Caco-2 (cell line): ENCODE measurements at regions of chr4 and their contacts with region 1.

Region 1: DNA sequence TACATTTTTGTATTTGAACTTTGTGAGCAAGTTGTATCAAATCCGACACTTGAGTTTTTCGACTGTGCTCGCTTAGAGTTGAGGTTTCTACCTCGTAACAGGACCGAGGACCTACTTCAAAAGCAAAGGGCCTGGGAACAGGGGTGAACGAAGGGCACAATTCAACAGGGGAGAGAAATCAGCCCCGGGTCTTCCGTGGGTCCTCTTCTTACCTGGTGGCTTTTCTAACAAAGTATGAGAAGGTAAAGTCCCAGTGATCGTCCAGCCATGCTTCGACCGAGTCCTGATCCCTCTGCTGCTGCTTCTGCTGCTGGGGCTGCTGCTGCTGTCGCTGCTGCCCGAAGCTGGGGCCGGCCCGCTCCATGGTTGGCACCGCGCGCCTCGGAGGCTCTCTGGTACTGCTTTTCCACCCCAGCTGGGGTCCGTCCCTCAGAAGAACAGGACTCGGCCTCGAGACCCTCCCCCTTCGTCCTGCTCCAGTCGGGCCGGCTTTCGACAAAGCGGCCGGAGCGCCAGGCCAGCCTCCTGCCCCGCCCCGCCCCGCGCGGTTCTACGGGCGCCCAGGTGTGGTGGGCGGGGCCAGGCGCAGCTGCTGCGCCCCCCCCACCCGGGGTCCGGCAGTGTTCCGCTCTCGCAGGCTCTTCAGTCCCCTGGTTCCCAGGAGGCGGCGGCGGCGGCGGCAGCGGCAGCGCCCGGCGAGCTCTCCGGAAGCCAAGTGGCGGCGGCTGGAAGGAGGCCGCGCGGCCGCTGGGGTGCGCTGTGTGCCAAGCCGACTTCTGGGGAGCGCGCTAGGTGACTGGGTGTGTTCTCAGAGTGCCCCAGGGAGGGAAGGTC is at the start of gene PDE5A:
- DNase-seq: peak; percentile 82 to 91
- H3K4me3 ChIP-seq: peak within 1 kb of the TSS; percentile 69
- H3K4me3 Mint-ChIP-seq: peak within 1 kb of the TSS; percentile 90
- H3K27ac Mint-ChIP-seq: peak within 1 kb of the TSS; percentile 70
- H3K4me1 ChIP-seq: no peaks in the 10 kb centered on the region; the same call in 1 of the 2 replicates
- H3K4me1 Mint-ChIP-seq: peaks cover 5% of the 10 kb centered on the region
- H3K27me3 ChIP-seq: no peaks in the 10 kb centered on the region
- H3K27me3 Mint-ChIP-seq: no peaks in the 10 kb centered on the region
- CTCF ChIP-seq: peak; percentile 58 to 80
- total RNA-seq, gene PDE5A: 7.9 and 10.8 TPM in 2 replicates

Region 2: GRCh38 chr4:119314356-119314755 is 314.2 kb before region 1 on chr4:
- CTCF ChIA-PET with region 1: no interaction called
- POLR2A ChIA-PET with region 1: no interaction called
- intact Hi-C with region 1: loop called (anchors 1 kb)
- DNase-seq: peak in 1 of 2 experiments; percentile 60
- H3K4me3 ChIP-seq: no peak overlapping the region
- H3K4me3 Mint-ChIP-seq: no peak overlapping the region
- H3K27ac Mint-ChIP-seq: no peak overlapping the region
- H3K4me1 ChIP-seq: no peaks in the 10 kb centered on the region
- H3K4me1 Mint-ChIP-seq: no peaks in the 10 kb centered on the region
- H3K27me3 ChIP-seq: no peaks in the 10 kb centered on the region
- H3K27me3 Mint-ChIP-seq: no peaks in the 10 kb centered on the region
- CTCF ChIP-seq: peak in 1 of 2 experiments; percentile 49

Region 3: DNA sequence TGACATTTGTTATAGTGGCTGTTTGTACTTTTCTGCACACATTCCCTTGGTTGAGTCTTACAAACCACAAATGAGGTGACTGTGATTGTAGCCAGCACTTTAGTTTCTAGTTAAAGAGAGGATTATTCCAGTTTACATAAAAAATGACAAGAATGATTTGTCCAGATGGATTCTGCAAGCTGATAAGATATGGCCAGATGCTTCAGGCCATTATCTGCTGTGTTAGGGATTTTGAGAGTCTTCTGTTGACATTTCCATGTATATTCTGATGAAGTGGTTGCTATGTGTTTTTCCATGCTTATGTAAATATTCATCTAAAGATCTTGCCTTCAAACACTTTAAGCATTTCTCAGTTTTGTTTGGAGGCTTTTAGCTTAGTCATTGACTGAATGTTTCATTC is 31.1 kb after region 1 on chr4:
- CTCF ChIA-PET with region 1: interaction called, 7 read pairs
- POLR2A ChIA-PET with region 1: interaction called, 3 read pairs
- intact Hi-C with region 1: loop called (anchors 1 kb)
- DNase-seq: peak; percentile 43 to 56
- H3K4me3 ChIP-seq: no peak overlapping the region
- H3K4me3 Mint-ChIP-seq: no peak overlapping the region
- H3K27ac Mint-ChIP-seq: peak overlapping the region; percentile 34
- H3K4me1 ChIP-seq: peaks cover 44% of the 10 kb centered on the region
- H3K4me1 Mint-ChIP-seq: peaks cover 8% of the 10 kb centered on the region
- H3K27me3 ChIP-seq: no peaks in the 10 kb centered on the region
- H3K27me3 Mint-ChIP-seq: no peaks in the 10 kb centered on the region
- CTCF ChIP-seq: no peak

Region 4: GRCh38 chr4:119676026-119676425 is 47.5 kb after region 1 on chr4:
- CTCF ChIA-PET with region 1: no interaction called
- POLR2A ChIA-PET with region 1: no interaction called
- intact Hi-C with region 1: no loop called
- DNase-seq: no peak
- H3K4me3 ChIP-seq: no peak overlapping the region
- H3K4me3 Mint-ChIP-seq: no peak overlapping the region
- H3K27ac Mint-ChIP-seq: no peak overlapping the region
- H3K4me1 ChIP-seq: no peaks in the 10 kb centered on the region
- H3K4me1 Mint-ChIP-seq: no peaks in the 10 kb centered on the region
- H3K27me3 ChIP-seq: no peaks in the 10 kb centered on the region
- H3K27me3 Mint-ChIP-seq: no peaks in the 10 kb centered on the region
- CTCF ChIP-seq: no peak

Region 5: GRCh38 chr4:119785963-119786362 is 157.4 kb after region 1 on chr4:
- CTCF ChIA-PET with region 1: interaction called, 9 read pairs
- POLR2A ChIA-PET with region 1: no interaction called
- intact Hi-C with region 1: loop called (anchors 1 kb)
- DNase-seq: peak in 1 of 2 experiments; percentile 34
- H3K4me3 ChIP-seq: no peak overlapping the region
- H3K4me3 Mint-ChIP-seq: no peak overlapping the region
- H3K27ac Mint-ChIP-seq: no peak overlapping the region
- H3K4me1 ChIP-seq: no peaks in the 10 kb centered on the region
- H3K4me1 Mint-ChIP-seq: no peaks in the 10 kb centered on the region
- H3K27me3 ChIP-seq: no peaks in the 10 kb centered on the region
- H3K27me3 Mint-ChIP-seq: no peaks in the 10 kb centered on the region
- CTCF ChIP-seq: peak; percentile 51 to 63

Region 6: GRCh38 chr4:120049732-120050494 is 421.4 kb after region 1 on chr4:
- CTCF ChIA-PET with region 1: interaction called, 6 read pairs
- POLR2A ChIA-PET with region 1: no interaction called
- intact Hi-C with region 1: loop called (anchors 1 kb)
- DNase-seq: peak; percentile 75 to 81
- H3K4me3 ChIP-seq: no peak overlapping the region
- H3K4me3 Mint-ChIP-seq: no peak overlapping the region
- H3K27ac Mint-ChIP-seq: peak overlapping the region; percentile 76
- H3K4me1 ChIP-seq: no peaks in the 10 kb centered on the region
- H3K4me1 Mint-ChIP-seq: no peaks in the 10 kb centered on the region
- H3K27me3 ChIP-seq: no peaks in the 10 kb centered on the region
- H3K27me3 Mint-ChIP-seq: no peaks in the 10 kb centered on the region
- CTCF ChIP-seq: peak; percentile 78